Panc1 (cell line): ENCODE measurements at regions of chr7 and their contacts with region 1.

Region 1: DNA sequence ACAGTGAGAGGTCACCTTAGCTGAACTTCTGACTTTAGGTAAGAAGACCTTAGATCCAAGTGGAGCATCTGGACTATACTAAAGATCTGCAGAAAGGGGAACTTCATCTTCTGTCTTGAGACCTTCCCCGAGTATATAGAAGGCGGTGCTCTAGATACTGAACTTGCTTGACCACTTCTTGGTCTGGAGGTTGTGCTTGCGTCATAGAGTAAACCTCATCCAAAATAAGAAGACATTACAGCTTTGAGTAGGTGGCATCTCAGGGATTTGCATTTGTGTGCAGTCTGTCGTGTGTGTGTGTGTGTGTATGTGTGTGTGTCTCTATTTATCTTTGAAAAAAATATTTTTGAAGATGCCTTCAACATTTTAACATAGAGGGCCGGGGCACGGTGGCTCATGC is 157.5 kb downstream of the CHN2 start:
- DNase-seq: no peak
- ATAC-seq: no peak
- H3K4me3 ChIP-seq: no peak overlapping the region
- H3K27ac ChIP-seq: no peak overlapping the region
- H3K4me1 ChIP-seq: no peaks in the 10 kb centered on the region
- H3K27me3 ChIP-seq: peaks cover 7% of the 10 kb centered on the region
- CTCF ChIP-seq: no peak

Region 2: GRCh38 chr7:28509251-28510022 is 842.6 kb before region 1 on chr7:
- CTCF ChIA-PET with region 1: no interaction called
- POLR2A ChIA-PET with region 1: no interaction called
- in situ Hi-C with region 1: no loop called
- intact Hi-C with region 1: no loop called
- DNase-seq: no peak
- ATAC-seq: no peak
- H3K4me3 ChIP-seq: no peak overlapping the region
- H3K27ac ChIP-seq: no peak overlapping the region
- H3K4me1 ChIP-seq: no peaks in the 10 kb centered on the region
- H3K27me3 ChIP-seq: peaks cover 22% of the 10 kb centered on the region
- CTCF ChIP-seq: no peak

Region 3: GRCh38 chr7:29370531-29371314 is 18.7 kb after region 1 on chr7:
- CTCF ChIA-PET with region 1: no interaction called
- POLR2A ChIA-PET with region 1: no interaction called
- in situ Hi-C with region 1: no loop called
- intact Hi-C with region 1: no loop called
- DNase-seq: no peak
- ATAC-seq: peak; percentile 34; the same call in 1 of the 2 replicates
- H3K4me3 ChIP-seq: no peak overlapping the region
- H3K27ac ChIP-seq: no peak overlapping the region
- H3K4me1 ChIP-seq: no peaks in the 10 kb centered on the region
- H3K27me3 ChIP-seq: peaks cover 6% of the 10 kb centered on the region; the same call in 1 of the 2 replicates
- CTCF ChIP-seq: no peak

Region 4: GRCh38 chr7:29424295-29424983 is 72.4 kb after region 1 on chr7:
- CTCF ChIA-PET with region 1: no interaction called
- POLR2A ChIA-PET with region 1: interaction called, 20 read pairs
- in situ Hi-C with region 1: no loop called
- intact Hi-C with region 1: no loop called
- DNase-seq: no peak
- ATAC-seq: no peak
- H3K4me3 ChIP-seq: no peak overlapping the region
- H3K27ac ChIP-seq: no peak overlapping the region
- H3K4me1 ChIP-seq: no peaks in the 10 kb centered on the region
- H3K27me3 ChIP-seq: peaks cover 2% of the 10 kb centered on the region
- CTCF ChIP-seq: no peak

Region 5: GRCh38 chr7:31261341-31261740 is 1909.3 kb after region 1 on chr7:
- CTCF ChIA-PET with region 1: interaction called, 13 read pairs
- POLR2A ChIA-PET with region 1: no interaction called
- in situ Hi-C with region 1: no loop called
- intact Hi-C with region 1: no loop called
- DNase-seq: no peak
- ATAC-seq: no peak
- H3K4me3 ChIP-seq: no peak overlapping the region
- H3K27ac ChIP-seq: no peak overlapping the region
- H3K4me1 ChIP-seq: no peaks in the 10 kb centered on the region
- H3K27me3 ChIP-seq: peaks cover 6% of the 10 kb centered on the region; the same call in 1 of the 2 replicates
- CTCF ChIP-seq: no peak